Activated CD4-positive, alpha-beta memory T cell treated with anti-CD3 and anti-CD28 coated beads, Interleukin-2, amount 10 ng/mL, durations not matched to agents 7 days and 5 days (primary cell): ENCODE measurements at regions of chr2 and their contacts with region 1.

Region 1: GRCh38 chr2:101710471-101711318 is 13.2 kb downstream of the MAP4K4 start:
- DNase-seq: no peak
- H3K4me3 Mint-ChIP-seq: no peak overlapping the region
- H3K27ac Mint-ChIP-seq: peak overlapping the region; percentile 4
- H3K4me1 Mint-ChIP-seq: peaks cover 58% of the 10 kb centered on the region
- H3K27me3 Mint-ChIP-seq: no peaks in the 10 kb centered on the region

Region 2: GRCh38 chr2:101725515-101726192 is 15.0 kb after region 1 on chr2:
- CTCF ChIA-PET with region 1: interaction called, 5 read pairs
- POLR2A ChIA-PET with region 1: interaction called, 14 read pairs
- DNase-seq: no peak
- H3K4me3 Mint-ChIP-seq: no peak overlapping the region
- H3K27ac Mint-ChIP-seq: no peak overlapping the region
- H3K4me1 Mint-ChIP-seq: peaks cover 81% of the 10 kb centered on the region
- H3K27me3 Mint-ChIP-seq: no peaks in the 10 kb centered on the region